PC-9 (cell line): ENCODE measurements at regions of chr14 and their contacts with region 1.

Region 1: DNA sequence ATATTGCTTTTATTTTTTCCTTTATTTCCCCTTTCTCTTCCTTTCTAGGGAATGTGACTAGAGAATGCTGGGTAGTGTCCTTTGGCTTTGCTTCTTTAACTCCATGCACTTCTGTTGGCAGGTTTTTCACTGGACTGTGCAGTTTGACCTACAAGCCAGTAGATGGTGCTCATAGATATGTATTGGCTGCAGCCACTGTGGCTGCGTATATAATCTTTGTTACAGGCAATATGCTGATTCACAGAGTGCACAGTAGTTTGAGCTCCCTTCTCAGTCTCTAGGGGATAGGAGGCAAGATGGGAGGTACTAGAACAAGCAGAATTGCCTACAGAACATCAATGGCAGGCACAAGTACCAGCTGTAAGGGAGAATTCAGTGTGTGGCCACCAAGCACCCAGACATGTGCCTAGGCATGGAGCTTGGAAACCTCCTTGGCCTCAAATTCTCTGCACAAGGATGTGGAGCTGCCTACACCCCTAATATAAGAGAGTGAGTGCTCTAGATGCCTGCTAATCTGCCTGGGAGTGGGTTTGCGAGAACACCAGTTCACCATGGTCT is 503.6 kb downstream of the LRFN5 start:
- DNase-seq: no peak
- H3K4me3 ChIP-seq: no peak overlapping the region
- H3K27ac ChIP-seq: no peak overlapping the region
- H3K4me1 ChIP-seq: no peaks in the 10 kb centered on the region
- H3K27me3 ChIP-seq: no peaks in the 10 kb centered on the region
- CTCF ChIP-seq: peak; percentile 70

Region 2: DNA sequence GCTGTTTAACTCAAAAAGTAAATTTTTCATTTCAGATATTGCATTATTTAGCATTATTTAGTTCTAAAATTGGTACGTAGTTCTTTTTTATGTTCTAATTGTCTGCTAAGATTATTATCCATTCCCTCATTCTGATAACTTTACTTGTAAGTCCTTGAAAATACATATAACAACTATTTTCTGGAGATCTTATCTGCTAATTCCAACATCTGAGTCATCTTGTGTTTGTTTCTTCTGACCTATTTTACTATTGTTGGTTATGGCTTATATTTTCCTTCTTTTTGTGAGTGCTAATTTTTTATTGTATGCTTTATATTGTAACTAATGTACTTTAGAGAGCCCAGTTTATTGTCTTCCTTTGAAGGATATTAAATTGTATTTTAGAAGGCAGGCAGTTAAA is 652.9 kb before region 1 on chr14:
- CTCF ChIA-PET with region 1: no interaction called
- POLR2A ChIA-PET with region 1: interaction called, 12 read pairs
- intact Hi-C with region 1: no loop called
- DNase-seq: no peak
- H3K4me3 ChIP-seq: no peak overlapping the region
- H3K27ac ChIP-seq: no peak overlapping the region
- H3K4me1 ChIP-seq: no peaks in the 10 kb centered on the region
- H3K27me3 ChIP-seq: no peaks in the 10 kb centered on the region
- CTCF ChIP-seq: no peak

Region 3: GRCh38 chr14:42057111-42057510 is 53.1 kb before region 1 on chr14:
- CTCF ChIA-PET with region 1: no interaction called
- POLR2A ChIA-PET with region 1: no interaction called
- intact Hi-C with region 1: no loop called
- DNase-seq: no peak
- H3K4me3 ChIP-seq: no peak overlapping the region
- H3K27ac ChIP-seq: no peak overlapping the region
- H3K4me1 ChIP-seq: no peaks in the 10 kb centered on the region
- H3K27me3 ChIP-seq: no peaks in the 10 kb centered on the region
- CTCF ChIP-seq: no peak